ENCODE measurements at regions of chr9 and their contacts with region 1.

Region 1: DNA sequence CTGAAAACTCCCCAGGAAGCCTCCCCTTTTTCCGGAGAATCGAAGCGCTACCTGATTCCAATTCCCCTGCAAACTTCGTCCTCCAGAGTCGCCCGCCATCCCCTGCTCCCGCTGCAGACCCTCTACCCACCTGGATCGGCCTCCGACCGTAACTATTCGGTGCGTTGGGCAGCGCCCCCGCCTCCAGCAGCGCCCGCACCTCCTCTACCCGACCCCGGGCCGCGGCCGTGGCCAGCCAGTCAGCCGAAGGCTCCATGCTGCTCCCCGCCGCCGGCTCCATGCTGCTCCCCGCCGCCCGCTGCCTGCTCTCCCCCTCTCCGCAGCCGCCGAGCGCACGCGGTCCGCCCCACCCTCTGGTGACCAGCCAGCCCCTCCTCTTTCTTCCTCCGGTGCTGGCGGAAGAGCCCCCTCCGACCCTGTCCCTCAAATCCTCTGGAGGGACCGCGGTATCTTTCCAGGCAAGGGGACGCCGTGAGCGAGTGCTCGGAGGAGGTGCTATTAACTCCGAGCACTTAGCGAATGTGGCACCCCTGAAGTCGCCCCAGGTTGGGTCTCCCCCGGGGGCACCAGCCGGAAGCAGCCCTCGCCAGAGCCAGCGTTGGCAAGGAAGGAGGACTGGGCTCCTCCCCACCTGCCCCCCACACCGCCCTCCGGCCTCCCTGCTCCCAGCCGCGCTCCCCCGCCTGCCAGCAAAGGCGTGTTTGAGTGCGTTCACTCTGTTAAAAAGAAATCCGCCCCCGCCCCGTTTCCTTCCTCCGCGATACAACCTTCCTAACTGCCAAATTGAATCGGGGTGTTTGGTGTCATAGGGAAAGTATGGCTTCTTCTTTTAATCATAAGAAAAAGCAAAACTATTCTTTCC is 19.4 kb downstream of the CDKN2A start:
- DNase-seq: peak; percentile 80
- H3K4me3 Mint-ChIP-seq: peak overlapping the region; percentile 83
- H3K27ac Mint-ChIP-seq: peak overlapping the region; percentile 52
- H3K4me1 Mint-ChIP-seq: peaks cover 21% of the 10 kb centered on the region
- H3K27me3 Mint-ChIP-seq: peaks cover 90% of the 10 kb centered on the region

Region 2: DNA sequence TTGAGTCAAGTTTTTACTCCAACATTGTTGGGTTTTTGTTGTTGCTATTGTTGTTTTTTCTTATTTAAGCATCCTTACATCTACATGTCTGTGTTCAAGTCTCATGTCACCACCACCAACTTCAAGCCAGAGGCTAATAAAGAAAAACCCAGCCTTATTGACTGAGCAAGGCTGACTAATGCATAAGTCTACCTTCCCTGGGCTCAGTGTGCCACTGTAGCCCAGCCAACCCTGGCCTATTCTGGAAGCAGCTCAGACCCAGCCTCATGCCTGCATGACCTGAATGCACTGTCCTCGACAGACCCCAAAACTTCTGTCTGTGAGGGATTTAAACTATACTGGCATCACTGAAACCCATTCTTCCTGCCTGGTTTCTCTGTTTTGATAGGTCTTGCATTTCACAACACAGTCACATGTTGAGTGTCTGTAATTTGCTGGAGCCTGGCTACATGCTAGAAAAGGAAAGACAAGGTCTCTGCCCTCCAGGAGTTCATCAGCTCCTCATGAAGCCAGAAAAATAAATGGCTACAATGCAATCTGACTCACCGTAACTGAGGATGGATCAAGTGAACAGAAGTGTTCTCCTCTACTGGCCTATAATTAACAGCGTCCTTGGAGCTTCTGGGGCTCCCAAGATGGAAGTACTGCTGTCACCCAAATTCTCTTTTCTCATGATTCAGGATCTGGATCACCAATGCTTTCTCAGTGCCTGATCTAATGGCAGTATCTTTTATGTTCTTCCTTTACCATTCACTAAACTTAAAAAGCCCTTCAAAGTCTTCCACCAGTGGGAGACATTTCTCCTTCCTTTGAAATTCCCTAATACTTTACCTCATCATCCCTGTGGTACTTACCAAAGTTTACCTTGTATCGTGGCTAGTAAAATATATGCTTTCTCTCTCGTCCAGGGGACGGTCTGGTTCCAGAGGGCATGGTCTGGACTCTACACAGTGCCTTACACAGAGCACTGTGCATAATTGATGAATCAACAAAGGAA is 388.7 kb before region 1 on chr9:
- intact Hi-C with region 1: no loop called
- DNase-seq: no peak
- H3K4me3 Mint-ChIP-seq: no peak overlapping the region
- H3K27ac Mint-ChIP-seq: no peak overlapping the region
- H3K4me1 Mint-ChIP-seq: peaks cover 10% of the 10 kb centered on the region
- H3K27me3 Mint-ChIP-seq: peaks cover 5% of the 10 kb centered on the region

Region 3: DNA sequence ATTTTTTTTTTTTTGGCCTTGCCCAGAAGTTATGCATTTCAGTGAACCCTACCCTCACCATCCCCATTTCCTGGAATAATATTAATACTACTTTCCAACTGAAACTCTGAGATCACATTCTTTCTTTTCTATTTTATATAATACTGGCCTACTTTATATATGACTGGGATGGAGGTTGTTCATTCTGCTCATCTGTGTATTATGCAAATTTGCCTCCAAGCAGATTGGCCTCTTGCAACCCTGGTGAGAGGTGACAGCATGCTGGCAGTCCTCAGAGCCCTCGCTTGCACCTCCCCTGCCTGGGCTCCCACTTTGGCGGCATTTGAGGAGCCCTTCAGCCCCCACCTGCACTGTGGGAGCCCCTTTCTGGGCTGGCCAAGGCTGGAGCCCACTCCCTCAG is 15.9 kb before region 1 on chr9:
- intact Hi-C with region 1: no loop called
- DNase-seq: no peak
- H3K4me3 Mint-ChIP-seq: no peak overlapping the region
- H3K27ac Mint-ChIP-seq: no peak overlapping the region
- H3K4me1 Mint-ChIP-seq: no peaks in the 10 kb centered on the region
- H3K27me3 Mint-ChIP-seq: peaks cover 46% of the 10 kb centered on the region

Region 4: GRCh38 chr9:21989440-21990189 is 14.8 kb after region 1 on chr9:
- intact Hi-C with region 1: loop called (anchors 1 kb)
- DNase-seq: no peak
- H3K4me3 Mint-ChIP-seq: no peak overlapping the region
- H3K27ac Mint-ChIP-seq: no peak overlapping the region
- H3K4me1 Mint-ChIP-seq: peaks cover 31% of the 10 kb centered on the region
- H3K27me3 Mint-ChIP-seq: peaks cover 56% of the 10 kb centered on the region

Region 5: DNA sequence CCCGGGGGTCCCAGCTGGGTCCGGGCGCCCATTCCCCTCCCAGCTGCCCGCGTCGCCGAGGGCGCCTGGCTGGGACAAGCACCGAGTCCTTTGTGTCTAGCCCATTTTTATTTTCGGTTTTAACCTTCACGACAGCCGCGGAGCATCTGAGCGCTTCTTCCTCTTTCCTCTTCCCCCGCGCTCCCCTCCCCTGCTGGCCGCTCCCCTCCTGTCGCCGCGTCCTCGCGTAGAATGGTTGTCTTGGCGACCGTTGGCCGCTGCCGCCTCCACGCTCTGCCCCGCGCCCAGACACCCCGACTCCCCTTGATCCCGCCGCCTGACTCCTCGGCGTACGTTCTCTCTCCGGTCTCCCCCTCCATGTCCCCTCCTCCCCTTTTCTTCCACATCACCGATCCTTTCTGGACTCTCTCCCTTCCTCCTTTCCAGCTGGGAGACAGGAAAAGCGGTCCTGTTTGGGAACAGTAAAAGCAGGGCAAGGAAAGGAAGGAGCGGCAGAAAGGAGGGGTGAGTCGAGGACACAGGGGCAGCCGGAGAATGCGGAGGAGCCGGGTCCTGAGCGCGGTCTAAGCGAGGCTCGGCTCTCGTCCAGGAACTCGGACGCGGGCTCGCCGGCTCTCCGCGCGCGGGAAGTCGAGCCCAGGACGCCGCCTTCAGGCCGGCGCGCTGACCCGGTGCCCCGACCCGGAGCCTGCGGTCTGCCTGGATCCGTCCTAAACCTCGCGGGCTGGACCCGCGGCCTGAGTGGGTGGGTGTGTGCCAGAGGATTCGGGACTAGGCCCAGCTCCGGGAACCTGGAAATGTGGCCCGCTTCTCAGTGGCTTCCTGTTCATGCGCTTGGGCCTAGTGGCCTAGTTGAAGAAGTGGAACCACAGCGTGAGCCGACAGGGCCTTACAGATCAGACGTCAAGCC is 20.7 kb after region 1 on chr9:
- intact Hi-C with region 1: loop called (anchors 1 kb)
- DNase-seq: peak; percentile 95
- H3K4me3 Mint-ChIP-seq: peak overlapping the region; percentile 88
- H3K27ac Mint-ChIP-seq: peak overlapping the region; percentile 95
- H3K4me1 Mint-ChIP-seq: peaks cover 29% of the 10 kb centered on the region
- H3K27me3 Mint-ChIP-seq: peaks cover 51% of the 10 kb centered on the region

Region 6: GRCh38 chr9:22119537-22120158 is 144.9 kb after region 1 on chr9:
- intact Hi-C with region 1: loop called (anchors 2 kb)
- DNase-seq: peak; percentile 78
- H3K4me3 Mint-ChIP-seq: no peak overlapping the region
- H3K27ac Mint-ChIP-seq: no peak overlapping the region
- H3K4me1 Mint-ChIP-seq: peaks cover 13% of the 10 kb centered on the region
- H3K27me3 Mint-ChIP-seq: peaks cover 62% of the 10 kb centered on the region

Region 7: DNA sequence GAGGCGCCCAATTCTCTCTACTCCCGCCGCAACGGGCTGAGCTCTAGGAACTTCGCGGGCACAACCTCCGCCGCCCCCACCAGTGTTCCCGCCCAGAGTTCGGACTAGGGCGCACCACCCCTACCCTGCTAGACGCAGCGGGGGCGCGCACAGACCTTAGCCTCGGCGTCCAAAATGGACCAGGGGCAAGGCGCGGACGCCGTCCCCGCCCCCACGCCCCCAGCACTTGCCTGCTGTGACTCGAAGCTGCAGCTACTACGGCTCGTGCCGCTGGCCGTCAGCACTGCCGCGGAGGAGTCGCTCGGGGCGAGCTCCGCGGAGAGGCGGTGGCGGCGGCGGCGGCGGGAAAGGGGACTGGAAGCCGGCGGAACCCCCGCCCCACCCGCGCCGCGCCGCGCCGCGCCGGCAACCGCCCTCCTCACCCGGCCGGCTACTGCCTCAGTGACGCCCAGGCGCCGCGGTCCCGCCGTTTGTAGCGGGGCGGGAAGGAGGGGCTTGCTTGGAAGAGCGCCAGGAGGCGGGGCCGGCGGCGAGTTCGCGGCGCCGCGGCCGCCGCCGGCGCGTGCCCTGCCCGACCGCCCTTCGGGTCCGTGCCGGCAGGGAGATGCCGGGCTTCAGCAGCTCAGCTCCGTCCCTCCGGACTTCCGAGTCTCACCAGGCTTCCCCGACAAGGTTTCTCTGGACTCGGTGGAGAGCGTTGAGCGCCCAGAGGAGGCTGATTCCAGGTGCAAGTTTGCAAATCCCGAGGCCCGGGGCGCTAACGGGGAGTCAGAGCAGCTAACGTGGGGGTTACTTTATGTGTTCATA is 1846.8 kb after region 1 on chr9:
- intact Hi-C with region 1: loop called (anchors 5 kb)
- DNase-seq: no peak
- H3K4me3 Mint-ChIP-seq: no peak overlapping the region
- H3K27ac Mint-ChIP-seq: peak overlapping the region; percentile 67
- H3K4me1 Mint-ChIP-seq: no peaks in the 10 kb centered on the region
- H3K27me3 Mint-ChIP-seq: peaks cover 18% of the 10 kb centered on the region